Breast epithelium (tissue), 4 donors: ENCODE measurements at regions of chr2 and their contacts with region 1.

Region 1: GRCh38 chr2:88206665-88207347 is 36.7 kb downstream of the THNSL2 start:
- DNase-seq: no peak
- H3K4me3 ChIP-seq: no peak overlapping the region
- H3K27ac ChIP-seq: no peak overlapping the region
- H3K4me1 ChIP-seq: no peaks in the 10 kb centered on the region
- H3K27me3 ChIP-seq: no peaks in the 10 kb centered on the region
- CTCF ChIP-seq: no peak
- POLR2A ChIP-seq: no peak

Region 2: DNA sequence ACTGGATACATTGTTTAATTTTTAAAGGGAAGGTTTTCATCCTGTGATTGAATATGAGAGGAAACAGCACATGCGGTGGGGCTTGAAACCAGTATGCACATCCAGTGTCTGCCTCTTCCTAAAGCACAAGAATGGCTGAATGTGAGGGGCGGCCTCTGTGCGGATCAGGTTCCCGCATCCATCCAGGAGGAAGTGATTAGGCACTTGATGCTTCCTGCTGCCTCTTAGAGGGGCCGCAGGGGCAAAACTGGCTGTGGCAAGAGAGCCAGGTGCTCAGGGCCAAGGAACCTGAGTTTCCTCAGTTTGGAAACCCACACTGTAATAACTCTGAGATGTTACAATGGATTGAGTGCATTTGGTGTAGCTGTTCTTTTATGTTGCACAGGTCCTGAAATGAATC is 12.2 kb after region 1 on chr2:
- intact Hi-C with region 1: loop called (anchors 1 kb)
- DNase-seq: no peak
- H3K4me3 ChIP-seq: no peak overlapping the region
- H3K27ac ChIP-seq: no peak overlapping the region
- H3K4me1 ChIP-seq: no peaks in the 10 kb centered on the region
- H3K27me3 ChIP-seq: no peaks in the 10 kb centered on the region
- CTCF ChIP-seq: no peak
- POLR2A ChIP-seq: no peak